GM18951 (cell line): ENCODE measurements at regions of chr7 and their contacts with region 1.

Region 1: DNA sequence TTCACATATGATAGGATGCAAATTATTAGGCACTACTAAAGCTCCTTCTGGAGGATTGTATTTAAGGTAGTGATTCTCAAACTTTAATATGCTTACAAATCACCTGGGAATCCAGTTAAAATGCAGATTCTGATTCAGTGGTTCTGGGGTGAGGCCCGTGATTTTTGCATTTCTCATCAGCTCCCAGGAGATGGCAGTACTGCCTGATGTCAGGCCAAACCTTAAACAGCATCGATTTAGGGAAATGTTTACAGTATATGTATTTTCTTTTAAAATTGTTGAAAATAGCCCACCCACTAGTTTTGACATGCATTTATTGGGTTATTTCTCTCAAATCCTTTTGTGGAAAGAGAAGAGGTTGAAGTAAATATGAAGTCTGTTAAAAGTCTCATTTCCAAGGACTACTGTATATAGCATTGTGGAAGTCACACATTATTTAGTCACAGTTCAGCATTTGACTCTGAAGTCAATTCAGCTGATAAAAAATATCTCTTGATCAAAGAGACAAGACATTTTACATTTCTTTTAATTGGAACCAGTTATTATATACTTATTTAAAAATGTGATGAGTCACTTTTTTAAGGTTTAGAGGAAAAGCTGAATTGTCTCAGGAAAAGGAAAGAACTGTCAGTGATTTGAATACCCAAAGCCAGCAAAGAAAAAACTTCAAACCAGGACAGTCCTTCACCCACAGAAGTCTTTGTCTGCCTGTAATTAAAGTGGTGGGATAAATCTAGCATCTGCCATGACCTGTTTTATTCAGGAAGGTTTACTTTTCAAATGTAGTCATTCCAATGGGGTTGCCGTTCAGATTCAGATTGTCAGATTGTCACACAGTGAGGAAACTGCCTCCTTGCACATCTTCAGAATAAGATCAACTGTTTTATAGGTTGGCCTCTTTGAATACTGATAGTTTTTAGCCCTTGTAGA is 21.1 kb upstream of the HBP1 start:
- POLR2A ChIP-seq: no peak

Region 2: GRCh38 chr7:106542550-106543220 is 605.0 kb before region 1 on chr7:
- in situ Hi-C with region 1: loop called (anchors 25 kb)
- POLR2A ChIP-seq: no peak

Region 3: DNA sequence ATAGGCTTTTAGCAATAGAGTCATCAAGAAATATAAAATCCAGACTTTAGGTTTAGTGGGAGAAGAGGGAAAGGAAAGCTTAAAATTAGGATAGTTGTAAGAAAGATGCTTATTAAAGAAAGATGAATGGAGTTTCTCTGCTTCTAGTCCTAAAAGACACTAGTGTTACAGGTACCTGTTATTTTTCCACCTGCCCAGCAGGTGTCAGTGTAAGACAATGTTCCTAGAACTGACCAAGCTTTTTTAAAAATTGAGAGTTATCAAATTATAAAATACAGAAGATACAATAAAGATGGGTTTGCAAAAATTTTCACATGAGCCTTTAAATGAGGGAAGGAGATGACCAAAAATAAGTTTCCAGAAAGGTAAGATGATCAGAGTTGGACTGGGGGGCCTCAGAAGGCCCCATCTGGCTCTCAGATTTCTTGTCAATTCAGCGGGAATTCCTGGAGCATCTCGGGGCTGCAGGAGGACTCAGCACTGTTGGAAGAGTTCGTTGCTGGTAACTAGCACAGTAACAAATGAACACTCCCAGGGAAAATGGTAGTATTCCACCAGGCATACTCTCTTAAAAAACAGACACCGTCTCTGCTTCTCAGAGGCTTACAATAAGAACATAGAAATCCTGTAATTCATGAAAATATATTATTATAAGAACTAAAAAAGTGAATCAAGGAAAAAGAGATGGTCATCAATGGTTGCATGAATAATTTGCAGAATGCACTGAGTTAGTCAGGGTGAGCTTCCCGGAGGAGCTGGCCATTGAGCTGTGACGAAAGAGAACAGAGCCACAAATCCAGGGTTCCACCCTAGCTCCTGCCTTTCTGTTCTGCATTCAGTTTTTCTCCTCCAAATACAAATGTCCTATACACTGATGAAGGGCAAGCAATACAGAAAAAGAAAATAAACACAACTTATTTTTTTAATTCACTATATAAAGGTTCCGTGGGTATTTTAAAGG is 354.4 kb before region 1 on chr7:
- in situ Hi-C with region 1: loop called (anchors 5 kb)
- POLR2A ChIP-seq: no peak

Region 4: DNA sequence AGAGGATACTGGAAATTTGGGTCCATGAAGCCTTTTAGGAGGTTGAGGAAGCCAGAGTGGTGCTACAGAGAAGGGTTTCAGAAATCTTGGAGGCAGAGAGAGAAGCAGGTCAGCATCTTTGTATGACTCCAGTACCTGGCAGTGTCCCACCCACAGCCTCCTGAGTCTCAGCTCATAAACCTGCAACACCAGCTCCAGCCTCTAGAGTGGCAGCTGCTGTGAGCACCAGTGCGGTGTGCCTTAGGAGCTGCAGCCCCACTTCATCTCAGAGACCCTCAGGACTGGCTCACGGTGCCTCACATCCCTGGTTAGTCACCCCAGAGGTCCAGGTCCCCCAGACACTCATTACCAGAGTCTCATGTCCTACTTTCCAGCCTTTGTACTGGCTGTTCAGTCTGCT is 188.0 kb before region 1 on chr7:
- in situ Hi-C with region 1: loop called (anchors 10 kb)
- POLR2A ChIP-seq: no peak

Region 5: GRCh38 chr7:107035446-107035845 is 112.3 kb before region 1 on chr7:
- in situ Hi-C with region 1: no loop called
- POLR2A ChIP-seq: no peak